Psoas muscle (tissue), 8 donors: ENCODE measurements at regions of chr20 and their contacts with region 1.

Region 1: GRCh38 chr20:54649511-54649962 is 174.1 kb downstream of the DOK5 start:
- DNase-seq: peak; percentile 67 to 80
- ATAC-seq: peak; percentile 44 to 86 (median 68)
- H3K4me3 ChIP-seq: no peak overlapping the region
- H3K27ac ChIP-seq: no peak overlapping the region
- H3K4me1 ChIP-seq: no peaks in the 10 kb centered on the region
- H3K27me3 ChIP-seq: no peaks in the 10 kb centered on the region
- CTCF ChIP-seq: peak; percentile 71

Region 2: DNA sequence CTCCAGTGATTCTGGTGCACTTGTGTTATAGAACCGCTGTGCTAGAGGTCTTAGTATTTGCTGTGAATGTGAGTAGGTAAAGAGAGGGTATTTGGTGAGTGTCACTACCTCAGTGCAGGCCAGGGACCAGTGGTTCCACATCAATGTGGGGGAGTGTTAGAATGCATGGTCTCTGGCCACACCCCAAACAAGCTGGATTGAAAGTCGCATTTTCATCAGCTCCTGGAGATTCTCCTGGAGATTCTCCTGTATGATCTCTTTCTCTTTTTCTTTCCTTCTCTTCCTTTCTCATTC is 552.4 kb before region 1 on chr20:
- intact Hi-C with region 1: loop called (anchors 5 kb)
- DNase-seq: no peak
- ATAC-seq: no peak
- H3K4me3 ChIP-seq: no peak overlapping the region
- H3K27ac ChIP-seq: no peak overlapping the region
- H3K4me1 ChIP-seq: no peaks in the 10 kb centered on the region
- H3K27me3 ChIP-seq: peaks cover 0 to 7% (median 0%) of the 10 kb centered on the region in 3 donors
- CTCF ChIP-seq: no peak

Region 3: DNA sequence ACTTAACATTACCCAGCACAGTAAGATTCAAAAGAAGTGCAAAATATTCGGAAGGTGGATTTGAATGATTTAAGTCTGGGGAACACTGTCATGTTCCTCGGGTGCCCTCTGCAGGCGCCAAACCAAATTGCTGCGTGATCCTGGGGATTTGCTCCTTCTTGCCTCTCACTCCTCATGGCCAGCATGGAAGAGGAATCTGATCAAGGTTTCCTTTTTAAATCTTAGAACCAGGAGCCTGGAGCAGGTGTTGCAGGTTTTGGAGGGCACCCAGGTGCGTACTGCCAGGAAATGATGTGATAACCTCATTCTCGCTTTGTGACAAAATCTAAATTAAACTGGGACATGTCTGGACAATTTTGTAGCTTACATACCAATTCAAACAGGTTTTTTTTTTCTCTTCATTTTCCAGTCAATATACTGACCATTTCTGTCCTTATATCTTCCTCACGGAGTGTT is 449.8 kb before region 1 on chr20:
- intact Hi-C with region 1: loop called in 1 of 2 experiments (anchors 5 kb)
- DNase-seq: peak; percentile 67 to 79
- ATAC-seq: peak; percentile 64 to 84 (median 67)
- H3K4me3 ChIP-seq: no peak overlapping the region
- H3K27ac ChIP-seq: no peak overlapping the region
- H3K4me1 ChIP-seq: no peaks in the 10 kb centered on the region
- H3K27me3 ChIP-seq: no peaks in the 10 kb centered on the region
- CTCF ChIP-seq: peak; percentile 92

Region 4: GRCh38 chr20:54219751-54220426 is 429.6 kb before region 1 on chr20:
- intact Hi-C with region 1: loop called (anchors 2 to 5 kb)
- DNase-seq: no peak
- ATAC-seq: no peak
- H3K4me3 ChIP-seq: no peak overlapping the region
- H3K27ac ChIP-seq: no peak overlapping the region
- H3K4me1 ChIP-seq: peaks cover 30% of the 10 kb centered on the region
- H3K27me3 ChIP-seq: no peaks in the 10 kb centered on the region
- CTCF ChIP-seq: peak; percentile 51

Region 5: GRCh38 chr20:54456971-54457370 is 192.6 kb before region 1 on chr20:
- intact Hi-C with region 1: loop called (anchors 5 kb)
- DNase-seq: no peak
- ATAC-seq: peak in 3 of 4 donors; percentile 54 to 90 (median 78)
- H3K4me3 ChIP-seq: no peak overlapping the region
- H3K27ac ChIP-seq: no peak overlapping the region
- H3K4me1 ChIP-seq: no peaks in the 10 kb centered on the region
- H3K27me3 ChIP-seq: no peaks in the 10 kb centered on the region
- CTCF ChIP-seq: peak; percentile 27

Region 6: DNA sequence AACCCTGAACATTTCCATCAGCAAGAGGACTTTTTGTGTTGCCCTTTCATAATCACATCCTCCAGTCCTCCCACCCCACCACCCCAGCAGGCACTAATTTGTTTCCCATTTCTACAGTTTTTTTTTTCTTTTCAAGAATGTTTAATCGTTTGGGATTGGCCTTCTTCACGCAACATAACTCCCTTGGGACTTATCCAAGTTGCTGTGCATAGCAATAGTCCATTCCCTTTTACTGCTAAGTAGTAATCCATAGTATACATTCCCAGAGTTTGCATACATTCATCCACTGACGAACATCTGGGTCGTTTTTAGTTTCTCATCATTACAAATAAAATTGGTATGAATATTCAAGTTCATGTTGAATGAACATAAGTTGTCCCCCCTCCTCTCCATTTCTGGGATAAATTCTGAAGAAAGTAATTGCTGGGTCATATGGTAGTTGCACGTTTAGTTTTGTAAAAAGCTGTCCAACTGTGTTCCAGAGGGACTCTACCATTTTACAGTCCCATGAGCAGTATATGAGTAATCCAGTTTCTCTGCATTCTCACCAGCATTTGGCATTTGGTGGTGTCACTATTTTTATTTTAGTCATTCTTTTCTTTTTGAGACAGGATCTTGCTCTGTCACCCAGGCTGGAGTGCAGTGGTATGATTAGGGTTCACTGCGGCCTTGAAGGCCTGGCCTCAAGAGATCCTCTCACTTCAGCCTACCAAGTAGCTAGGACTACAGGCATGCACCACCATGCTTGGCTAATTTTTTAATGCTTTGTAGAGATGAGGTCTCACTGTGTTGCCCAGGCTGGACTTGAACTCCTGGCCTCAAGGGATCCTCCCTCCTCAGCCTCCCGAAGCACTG is 83.3 kb before region 1 on chr20:
- intact Hi-C with region 1: no loop called
- DNase-seq: no peak
- ATAC-seq: no peak
- H3K4me3 ChIP-seq: no peak overlapping the region
- H3K27ac ChIP-seq: no peak overlapping the region
- H3K4me1 ChIP-seq: peaks cover 5% of the 10 kb centered on the region
- H3K27me3 ChIP-seq: no peaks in the 10 kb centered on the region
- CTCF ChIP-seq: no peak

Region 7: GRCh38 chr20:55406872-55407271 is 757.3 kb after region 1 on chr20:
- intact Hi-C with region 1: no loop called
- DNase-seq: no peak
- ATAC-seq: no peak
- H3K4me3 ChIP-seq: no peak overlapping the region
- H3K27ac ChIP-seq: no peak overlapping the region
- H3K4me1 ChIP-seq: no peaks in the 10 kb centered on the region
- H3K27me3 ChIP-seq: no peaks in the 10 kb centered on the region
- CTCF ChIP-seq: no peak